GM18951 (cell line): ENCODE measurements at regions of chr15 and their contacts with region 1.

Region 1: GRCh38 chr15:34587717-34588674 is 4.5 kb upstream of the GOLGA8B start:
- POLR2A ChIP-seq: no peak

Region 2: GRCh38 chr15:34241372-34242330 is 346.3 kb before region 1 on chr15:
- in situ Hi-C with region 1: loop called (anchors 25 kb)
- POLR2A ChIP-seq: no peak

Region 3: GRCh38 chr15:34737477-34737876 is 149.5 kb after region 1 on chr15:
- in situ Hi-C with region 1: no loop called
- POLR2A ChIP-seq: no peak